ENCODE measurements at regions of chr13 and their contacts with region 1.

Region 1: DNA sequence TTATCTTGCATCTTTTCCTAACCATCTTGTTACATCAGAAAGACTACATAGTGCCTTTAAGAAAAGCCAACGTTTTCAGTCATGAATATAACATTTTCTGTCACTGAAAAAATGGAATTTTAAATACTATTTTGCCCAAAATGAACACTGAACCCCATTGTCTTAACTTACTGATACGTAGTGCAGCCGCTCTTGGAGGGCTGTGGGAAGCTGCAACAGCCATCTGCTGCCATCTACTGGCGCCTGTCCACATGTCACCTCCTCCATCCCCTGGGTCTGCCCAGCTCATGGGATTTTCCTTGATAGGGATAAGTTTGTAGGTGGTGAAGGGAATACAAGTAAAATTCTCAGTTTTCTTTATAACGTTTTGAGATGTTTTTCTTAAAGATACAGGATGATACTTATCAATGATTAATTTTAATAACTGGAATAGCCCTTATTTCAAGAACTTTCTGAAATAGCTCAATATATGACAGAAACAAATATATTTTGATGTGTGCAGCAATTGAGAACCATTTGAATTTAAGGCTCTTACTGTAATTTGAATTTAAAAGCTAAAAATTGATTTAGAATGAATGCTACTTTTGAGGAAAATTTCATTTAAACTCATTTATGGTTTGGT is 73.7 kb downstream of the GGACT start:
- DNase-seq: peak; percentile 63
- H3K4me3 Mint-ChIP-seq: no peak overlapping the region
- H3K27ac Mint-ChIP-seq: no peak overlapping the region
- H3K4me1 Mint-ChIP-seq: no peaks in the 10 kb centered on the region
- H3K27me3 Mint-ChIP-seq: no peaks in the 10 kb centered on the region
- CTCF ChIP-seq: no peak

Region 2: GRCh38 chr13:99656092-99656745 is 858.7 kb before region 1 on chr13:
- CTCF ChIA-PET with region 1: interaction called, 3 read pairs
- intact Hi-C with region 1: loop called (anchors 10 kb)
- DNase-seq: peak; percentile 65
- H3K4me3 Mint-ChIP-seq: peak overlapping the region; percentile 52
- H3K27ac Mint-ChIP-seq: peak overlapping the region; percentile 75
- H3K4me1 Mint-ChIP-seq: no peaks in the 10 kb centered on the region
- H3K27me3 Mint-ChIP-seq: no peaks in the 10 kb centered on the region
- CTCF ChIP-seq: peak; percentile 39

Region 3: DNA sequence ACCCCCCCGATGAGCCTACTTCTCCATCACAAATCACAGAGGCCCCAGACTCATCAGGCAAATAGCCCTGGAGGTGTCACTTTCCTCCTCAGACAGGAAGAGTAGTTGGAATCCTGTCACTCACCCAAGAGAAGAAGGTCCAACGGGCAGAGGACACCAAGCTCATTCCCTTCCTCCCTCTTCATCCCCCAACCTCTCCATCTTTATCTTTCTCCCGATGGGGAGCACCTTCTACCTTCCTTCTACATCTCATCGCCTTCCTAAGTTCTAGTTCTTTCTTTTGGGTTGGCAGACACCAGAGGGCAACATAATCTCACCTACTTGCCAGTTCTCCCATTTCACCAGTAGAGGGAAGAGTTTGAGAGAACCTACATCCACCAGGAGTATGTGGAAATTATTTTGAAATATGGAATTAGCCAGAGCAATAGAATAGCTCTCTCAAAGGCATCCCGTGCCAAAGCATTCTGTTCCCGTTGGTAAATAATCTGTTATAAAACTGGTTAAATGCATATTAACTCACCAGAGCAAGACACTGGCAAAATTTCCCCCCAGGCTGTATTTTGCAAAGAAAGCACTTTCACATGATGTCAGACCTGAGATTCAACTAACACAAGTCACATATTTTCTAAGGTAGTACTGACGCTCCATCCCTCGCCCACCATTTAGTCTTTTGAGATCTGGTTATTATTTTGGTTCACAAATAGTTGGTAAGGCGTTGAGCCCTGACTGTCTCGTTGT is 598.4 kb before region 1 on chr13:
- CTCF ChIA-PET with region 1: interaction called, 3 read pairs
- intact Hi-C with region 1: loop called (anchors 2 kb)
- DNase-seq: peak; percentile 3
- H3K4me3 Mint-ChIP-seq: no peak overlapping the region
- H3K27ac Mint-ChIP-seq: no peak overlapping the region
- H3K4me1 Mint-ChIP-seq: no peaks in the 10 kb centered on the region
- H3K27me3 Mint-ChIP-seq: peaks cover 2% of the 10 kb centered on the region
- CTCF ChIP-seq: peak; percentile 35

Region 4: DNA sequence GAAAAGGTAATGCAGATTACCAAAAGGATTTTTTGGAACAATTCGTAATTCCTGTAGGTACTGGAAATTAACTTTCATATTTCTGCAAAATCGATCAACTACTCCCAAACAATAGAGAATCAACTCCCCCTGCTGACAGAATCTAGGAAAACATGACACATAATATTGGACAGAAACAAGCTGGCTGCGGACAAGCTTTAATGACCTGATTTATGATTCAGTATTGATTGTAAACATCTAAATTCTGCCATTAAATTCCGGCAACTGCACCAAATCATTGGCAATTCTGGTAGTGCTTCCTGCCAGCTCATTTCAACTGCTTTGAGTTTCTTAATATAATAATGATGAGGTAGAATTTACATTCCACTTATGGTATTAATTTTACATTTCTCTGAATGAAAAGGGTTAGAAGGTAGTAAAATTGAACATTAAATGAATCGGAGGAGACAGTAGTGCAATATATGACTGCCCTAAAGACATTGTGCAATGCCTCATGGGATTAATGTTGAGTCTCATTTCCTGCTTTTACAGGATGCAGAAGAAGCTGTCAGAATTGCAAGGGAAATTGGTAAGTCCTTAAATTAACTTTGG is 279.5 kb before region 1 on chr13:
- CTCF ChIA-PET with region 1: interaction called, 4 read pairs
- intact Hi-C with region 1: loop called (anchors 5 kb)
- DNase-seq: peak; percentile 15
- H3K4me3 Mint-ChIP-seq: no peak overlapping the region
- H3K27ac Mint-ChIP-seq: no peak overlapping the region
- H3K4me1 Mint-ChIP-seq: no peaks in the 10 kb centered on the region
- H3K27me3 Mint-ChIP-seq: no peaks in the 10 kb centered on the region
- CTCF ChIP-seq: no peak

Region 5: GRCh38 chr13:100280681-100281080 is 234.2 kb before region 1 on chr13:
- CTCF ChIA-PET with region 1: no interaction called
- intact Hi-C with region 1: no loop called
- DNase-seq: no peak
- H3K4me3 Mint-ChIP-seq: no peak overlapping the region
- H3K27ac Mint-ChIP-seq: no peak overlapping the region
- H3K4me1 Mint-ChIP-seq: no peaks in the 10 kb centered on the region
- H3K27me3 Mint-ChIP-seq: no peaks in the 10 kb centered on the region
- CTCF ChIP-seq: no peak

Region 6: DNA sequence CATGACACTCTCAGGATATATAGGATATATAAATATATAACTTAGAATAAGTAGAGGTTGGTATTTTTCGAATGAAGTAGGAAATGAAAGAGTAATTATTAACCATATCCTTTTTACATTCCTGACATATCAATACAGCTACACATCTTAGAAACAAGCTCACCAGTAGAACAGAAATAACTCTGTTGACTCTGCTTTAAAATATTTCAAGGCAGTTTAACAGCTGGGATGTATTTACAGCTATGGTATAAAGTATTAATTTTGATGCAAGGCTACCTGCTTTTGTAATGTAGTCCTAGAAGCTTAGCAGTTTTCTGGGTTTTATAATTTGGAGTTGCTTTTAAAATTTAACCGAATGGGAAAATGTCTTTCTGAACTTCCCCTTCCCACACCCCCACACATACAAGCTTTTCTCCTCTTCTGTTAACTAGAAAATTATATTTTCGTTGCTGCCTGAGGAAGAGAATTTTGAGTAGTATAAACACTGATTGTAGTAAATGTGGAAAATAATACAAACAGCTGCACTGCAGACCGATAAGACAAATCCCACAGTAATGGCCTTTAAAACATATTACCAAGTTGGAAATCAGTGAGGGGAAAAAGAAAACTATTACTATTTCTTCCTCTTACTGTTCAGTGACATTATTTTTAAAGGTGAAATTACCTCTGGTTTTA is 74.0 kb before region 1 on chr13:
- CTCF ChIA-PET with region 1: no interaction called
- intact Hi-C with region 1: loop called (anchors 2 kb)
- DNase-seq: no peak
- H3K4me3 Mint-ChIP-seq: no peak overlapping the region
- H3K27ac Mint-ChIP-seq: no peak overlapping the region
- H3K4me1 Mint-ChIP-seq: peaks cover 19% of the 10 kb centered on the region
- H3K27me3 Mint-ChIP-seq: no peaks in the 10 kb centered on the region
- CTCF ChIP-seq: no peak

Region 7: GRCh38 chr13:100473087-100473486 is 41.8 kb before region 1 on chr13:
- CTCF ChIA-PET with region 1: no interaction called
- intact Hi-C with region 1: no loop called
- DNase-seq: no peak
- H3K4me3 Mint-ChIP-seq: no peak overlapping the region
- H3K27ac Mint-ChIP-seq: no peak overlapping the region
- H3K4me1 Mint-ChIP-seq: no peaks in the 10 kb centered on the region
- H3K27me3 Mint-ChIP-seq: no peaks in the 10 kb centered on the region
- CTCF ChIP-seq: no peak